ENCODE measurements at regions of chr6 and their contacts with region 1.

Region 1: DNA sequence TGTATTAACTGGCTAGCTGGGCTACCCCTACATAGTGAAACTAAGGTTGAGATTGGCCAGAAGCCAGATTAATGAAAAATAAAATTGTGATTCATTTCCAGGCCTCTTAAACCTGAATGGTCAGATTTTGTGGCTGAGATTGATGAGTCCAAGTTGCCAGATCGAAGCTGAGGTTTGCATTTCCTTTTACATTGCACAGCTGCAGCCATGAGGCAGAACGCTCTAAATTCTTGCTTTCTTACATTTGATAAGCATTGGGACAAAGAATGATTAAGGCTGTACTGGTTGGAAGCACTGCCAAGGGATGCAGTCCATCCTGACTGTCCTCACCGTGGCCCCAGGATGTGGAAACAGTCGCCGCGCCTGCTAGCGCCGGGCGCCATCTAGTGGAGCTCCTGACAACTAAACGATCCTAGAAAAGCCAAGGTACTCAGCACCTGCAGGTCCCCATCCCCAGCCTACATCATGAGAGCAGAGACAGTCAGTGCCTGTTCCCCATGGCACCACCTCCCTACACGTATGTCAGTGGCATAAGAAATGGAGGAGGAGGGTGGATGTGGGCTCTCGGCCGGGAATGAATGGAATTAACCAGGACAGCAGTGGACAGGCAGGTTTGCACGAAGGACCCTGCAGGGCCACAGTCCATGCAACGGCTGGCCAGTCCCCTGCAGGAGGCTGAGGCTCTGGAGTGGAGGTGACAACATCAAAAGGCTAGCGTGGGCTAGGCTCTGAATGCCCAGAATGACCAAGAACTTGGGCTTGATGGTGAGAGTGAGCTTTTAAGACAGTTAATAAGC is 19.0 kb downstream of the PXDC1 start:
- DNase-seq: peak; percentile 66 to 80 (median 72)
- ATAC-seq: peak in 3 of 4 donors; percentile 74 to 81 (median 80)
- H3K4me3 ChIP-seq: no peak overlapping the region
- H3K27ac ChIP-seq: peak overlapping the region in 1 of 12 donors; percentile 6
- H3K4me1 ChIP-seq: peaks cover 0 to 21% (median 7%) of the 10 kb centered on the region in 12 donors
- H3K27me3 ChIP-seq: no peaks in the 10 kb centered on the region
- CTCF ChIP-seq: peak; percentile 73 to 93 (median 85)
- POLR2A ChIP-seq: no peak

Region 2: DNA sequence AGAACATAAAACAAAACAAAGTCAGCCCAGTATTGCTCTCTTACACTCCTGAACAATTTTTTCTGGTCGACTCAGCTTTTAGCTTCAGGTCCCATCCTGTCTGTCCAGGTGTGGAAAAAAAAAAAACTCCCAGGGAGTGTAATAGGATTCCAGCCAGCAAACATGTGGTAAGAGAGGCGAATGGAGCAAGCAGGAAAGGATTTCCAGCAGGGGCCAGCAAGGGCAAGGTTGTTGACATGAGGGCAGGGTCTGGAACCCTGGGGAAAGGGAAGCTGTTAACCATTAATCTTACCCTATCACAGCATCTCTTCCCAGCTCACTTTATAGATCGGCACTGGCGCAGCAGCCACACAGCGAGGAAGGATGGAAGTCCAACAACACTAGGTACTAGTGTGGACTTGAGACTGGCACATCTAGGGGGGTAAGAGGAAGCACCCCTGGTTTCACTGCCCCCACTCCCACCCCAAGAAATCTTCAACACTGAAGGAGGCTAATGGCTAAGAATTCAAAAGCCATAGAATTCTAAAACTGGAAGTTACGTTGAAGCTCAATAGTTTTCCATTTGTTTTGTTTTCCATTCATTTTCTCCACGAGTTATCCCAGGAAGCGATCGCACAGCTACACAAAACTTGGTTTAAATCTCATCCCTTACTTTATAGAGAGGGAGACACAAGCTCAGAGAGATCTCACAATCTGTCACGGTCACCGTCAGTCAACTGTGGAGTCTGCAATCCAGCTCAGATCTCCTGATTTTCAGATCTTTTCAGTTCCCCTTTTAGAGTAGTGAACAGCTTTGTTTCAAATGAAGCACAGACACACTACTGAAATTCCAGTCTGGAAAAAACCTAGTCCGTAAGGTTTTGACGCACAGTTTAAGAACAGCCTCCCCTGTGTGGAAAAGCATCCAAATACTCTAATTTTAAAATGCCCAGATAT is 329.0 kb before region 1 on chr6:
- intact Hi-C with region 1: loop called in 1 of 10 experiments (anchors 10 kb)
- DNase-seq: no peak
- ATAC-seq: peak in 1 of 4 donors; percentile 14
- H3K4me3 ChIP-seq: no peak overlapping the region
- H3K27ac ChIP-seq: no peak overlapping the region
- H3K4me1 ChIP-seq: peaks cover 0 to 11% (median 0%) of the 10 kb centered on the region in 12 donors
- H3K27me3 ChIP-seq: no peaks in the 10 kb centered on the region
- CTCF ChIP-seq: no peak
- POLR2A ChIP-seq: no peak

Region 3: GRCh38 chr6:3410385-3411360 is 321.9 kb before region 1 on chr6:
- intact Hi-C with region 1: loop called in 9 of 10 experiments (anchors 5 to 10 kb)
- DNase-seq: peak in 4 of 5 donors; percentile 46 to 56 (median 54)
- ATAC-seq: peak in 3 of 4 donors; percentile 32 to 58 (median 53)
- H3K4me3 ChIP-seq: no peak overlapping the region
- H3K27ac ChIP-seq: no peak overlapping the region
- H3K4me1 ChIP-seq: peaks cover 0 to 6% (median 0%) of the 10 kb centered on the region in 12 donors
- H3K27me3 ChIP-seq: no peaks in the 10 kb centered on the region
- CTCF ChIP-seq: peak; percentile 54 to 79 (median 70)
- POLR2A ChIP-seq: no peak

Region 4: DNA sequence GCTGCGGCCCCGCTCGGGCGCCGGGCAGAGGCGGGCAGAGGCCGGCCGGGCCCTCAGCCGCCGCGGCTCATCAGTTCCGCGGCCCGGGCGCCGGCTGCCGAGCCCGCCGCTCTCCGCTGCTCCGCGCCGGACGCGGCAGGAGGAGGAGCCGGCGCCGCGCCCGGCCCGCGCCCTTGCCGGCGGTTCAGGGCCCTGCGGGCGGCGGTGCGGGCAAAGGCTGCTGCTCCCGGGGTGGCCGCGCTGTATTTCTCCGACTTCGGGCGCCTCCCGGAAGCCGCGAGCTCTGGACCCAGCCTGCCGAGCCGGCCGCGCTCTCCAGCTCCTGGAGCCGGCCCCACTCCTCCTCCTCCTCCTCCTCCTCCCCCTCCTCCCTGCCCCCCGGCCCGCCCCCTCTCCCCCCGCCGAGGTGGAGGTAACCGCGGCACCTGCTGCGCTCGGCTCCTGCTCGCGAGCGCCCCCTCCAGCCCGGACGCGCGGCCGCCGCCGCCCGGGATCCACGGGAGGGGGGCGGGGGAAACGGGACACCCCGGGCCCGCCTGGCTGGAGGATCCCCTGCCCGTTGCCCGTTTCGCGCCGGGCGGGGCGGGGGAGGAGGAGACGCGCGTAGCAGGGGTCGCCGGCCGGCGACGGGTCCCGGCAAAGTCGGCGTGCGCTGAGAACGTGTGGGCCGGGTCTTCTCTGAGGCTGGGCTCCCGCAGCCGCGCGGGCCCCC is 275.6 kb before region 1 on chr6 and contains the start of gene SLC22A23:
- intact Hi-C with region 1: loop called in 3 of 10 experiments (anchors 5 to 10 kb)
- DNase-seq: peak; percentile 62 to 76 (median 71)
- ATAC-seq: peak; percentile 41 to 90 (median 80)
- H3K4me3 ChIP-seq: peak within 1 kb of the TSS; percentile 54 to 84 (median 64)
- H3K27ac ChIP-seq: peak within 1 kb of the TSS in 10 of 12 donors; percentile 1 to 82 (median 60)
- H3K4me1 ChIP-seq: peaks cover 0 to 41% (median 29%) of the 10 kb centered on the region in 12 donors
- H3K27me3 ChIP-seq: peaks cover 0 to 60% (median 3%) of the 10 kb centered on the region in 9 donors
- CTCF ChIP-seq: peak; percentile 48 to 89 (median 74)
- POLR2A ChIP-seq: no peak
- total RNA-seq, gene SLC22A23: 4.4 to 12.4 (median 5.2) TPM

Region 5: GRCh38 chr6:3518356-3519225 is 214.0 kb before region 1 on chr6:
- intact Hi-C with region 1: no loop called
- DNase-seq: no peak
- ATAC-seq: no peak
- H3K4me3 ChIP-seq: no peak overlapping the region
- H3K27ac ChIP-seq: no peak overlapping the region
- H3K4me1 ChIP-seq: no peaks in the 10 kb centered on the region
- H3K27me3 ChIP-seq: peaks cover 0 to 12% (median 3%) of the 10 kb centered on the region in 9 donors
- CTCF ChIP-seq: no peak
- POLR2A ChIP-seq: no peak

Region 6: DNA sequence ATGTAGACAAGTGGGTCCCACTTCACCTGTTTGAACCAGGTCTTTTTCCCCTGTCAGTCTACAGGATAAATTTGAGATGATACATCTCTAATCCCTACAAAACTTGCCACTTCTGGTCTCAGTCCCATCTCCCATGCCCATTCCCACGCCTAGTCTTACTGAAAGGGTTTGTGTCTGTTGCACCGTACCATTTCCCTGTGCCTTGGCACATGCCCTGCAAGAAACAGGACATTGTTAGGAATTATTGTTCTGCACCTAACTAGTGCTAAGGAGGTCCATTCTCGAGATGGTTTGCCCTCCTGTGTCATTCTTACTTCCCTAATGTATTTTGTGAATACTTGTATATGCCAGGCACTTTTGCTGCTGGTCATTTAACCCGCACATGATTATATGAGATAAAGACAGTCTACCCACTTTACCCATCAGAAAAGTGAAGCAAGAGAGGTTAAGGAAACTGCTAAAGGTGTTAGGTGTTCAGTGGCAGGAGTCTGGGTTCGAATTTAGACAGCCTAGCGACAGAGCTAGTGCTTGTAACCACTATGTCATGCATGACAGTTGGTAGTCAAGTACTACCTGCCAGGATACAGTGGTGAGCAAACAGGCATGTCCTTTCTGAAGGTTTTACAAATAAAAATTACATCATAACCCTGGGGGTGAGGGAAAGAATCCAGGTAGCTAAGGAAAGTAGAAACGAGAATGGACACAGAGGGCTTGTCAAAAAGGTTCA is 333.6 kb after region 1 on chr6:
- intact Hi-C with region 1: no loop called
- DNase-seq: no peak
- ATAC-seq: no peak
- H3K4me3 ChIP-seq: no peak overlapping the region
- H3K27ac ChIP-seq: no peak overlapping the region
- H3K4me1 ChIP-seq: no peaks in the 10 kb centered on the region
- H3K27me3 ChIP-seq: no peaks in the 10 kb centered on the region
- CTCF ChIP-seq: no peak
- POLR2A ChIP-seq: no peak